HepG2 (cell line): ENCODE measurements at regions of chr17 and their contacts with region 1.

Region 1: GRCh38 chr17:43211480-43212402 is at the start of gene TMEM106A:
- DNase-seq: peak; percentile 75
- ATAC-seq: peak; percentile 81
- H3K4me3 ChIP-seq: peak within 1 kb of the TSS; percentile 77 to 98 (median 77)
- H3K27ac ChIP-seq: peak within 1 kb of the TSS; percentile 80
- H3K4me1 ChIP-seq: peaks cover 62% of the 10 kb centered on the region
- H3K27me3 ChIP-seq: no peaks in the 10 kb centered on the region; a peak in 1 of 5 replicates
- CTCF ChIP-seq: peak; percentile 48
- EP300 ChIP-seq: no peak
- POLR2A ChIP-seq: peak; percentile 82 to 97
- RAD21 ChIP-seq: peak; percentile 43
- total RNA-seq, gene TMEM106A: 7.3 and 16.9 TPM in 2 replicates

Region 2: DNA sequence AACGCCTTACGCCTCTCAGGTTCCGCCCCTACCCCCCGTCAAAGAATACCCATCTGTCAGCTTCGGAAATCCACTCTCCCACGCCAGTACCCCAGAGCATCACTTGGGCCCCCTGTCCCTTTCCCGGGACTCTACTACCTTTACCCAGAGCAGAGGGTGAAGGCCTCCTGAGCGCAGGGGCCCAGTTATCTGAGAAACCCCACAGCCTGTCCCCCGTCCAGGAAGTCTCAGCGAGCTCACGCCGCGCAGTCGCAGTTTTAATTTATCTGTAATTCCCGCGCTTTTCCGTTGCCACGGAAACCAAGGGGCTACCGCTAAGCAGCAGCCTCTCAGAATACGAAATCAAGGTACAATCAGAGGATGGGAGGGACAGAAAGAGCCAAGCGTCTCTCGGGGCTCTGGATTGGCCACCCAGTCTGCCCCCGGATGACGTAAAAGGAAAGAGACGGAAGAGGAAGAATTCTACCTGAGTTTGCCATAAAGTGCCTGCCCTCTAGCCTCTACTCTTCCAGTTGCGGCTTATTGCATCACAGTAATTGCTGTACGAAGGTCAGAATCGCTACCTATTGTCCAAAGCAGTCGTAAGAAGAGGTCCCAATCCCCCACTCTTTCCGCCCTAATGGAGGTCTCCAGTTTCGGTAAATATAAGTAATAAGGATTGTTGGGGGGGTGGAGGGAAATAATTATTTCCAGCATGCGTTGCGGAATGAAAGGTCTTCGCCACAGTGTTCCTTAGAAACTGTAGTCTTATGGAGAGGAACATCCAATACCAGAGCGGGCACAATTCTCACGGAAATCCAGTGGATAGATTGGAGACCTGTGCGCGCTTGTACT is 86.4 kb before region 1 on chr17 and contains the start of gene BRCA1:
- CTCF ChIA-PET with region 1: no interaction called
- POLR2A ChIA-PET with region 1: interaction called, 22 read pairs
- in situ Hi-C with region 1: no loop called
- intact Hi-C with region 1: no loop called
- DNase-seq: peak; percentile 100
- ATAC-seq: peak; percentile 91
- H3K4me3 ChIP-seq: peak within 1 kb of the TSS; percentile 87 to 94 (median 91)
- H3K27ac ChIP-seq: peak within 1 kb of the TSS; percentile 95
- H3K4me1 ChIP-seq: peaks cover 53% of the 10 kb centered on the region
- H3K27me3 ChIP-seq: no peaks in the 10 kb centered on the region; a peak in 1 of 5 replicates
- CTCF ChIP-seq: peak; percentile 23; the same call in 1 of the 2 replicates
- EP300 ChIP-seq: peak; percentile 45 to 73; a peak in 2 of 4 replicates
- POLR2A ChIP-seq: peak; percentile 76 to 97
- RAD21 ChIP-seq: peak; percentile 55; the same call in 1 of the 2 replicates
- total RNA-seq, gene BRCA1: 37.5 and 56.0 TPM in 2 replicates

Region 3: DNA sequence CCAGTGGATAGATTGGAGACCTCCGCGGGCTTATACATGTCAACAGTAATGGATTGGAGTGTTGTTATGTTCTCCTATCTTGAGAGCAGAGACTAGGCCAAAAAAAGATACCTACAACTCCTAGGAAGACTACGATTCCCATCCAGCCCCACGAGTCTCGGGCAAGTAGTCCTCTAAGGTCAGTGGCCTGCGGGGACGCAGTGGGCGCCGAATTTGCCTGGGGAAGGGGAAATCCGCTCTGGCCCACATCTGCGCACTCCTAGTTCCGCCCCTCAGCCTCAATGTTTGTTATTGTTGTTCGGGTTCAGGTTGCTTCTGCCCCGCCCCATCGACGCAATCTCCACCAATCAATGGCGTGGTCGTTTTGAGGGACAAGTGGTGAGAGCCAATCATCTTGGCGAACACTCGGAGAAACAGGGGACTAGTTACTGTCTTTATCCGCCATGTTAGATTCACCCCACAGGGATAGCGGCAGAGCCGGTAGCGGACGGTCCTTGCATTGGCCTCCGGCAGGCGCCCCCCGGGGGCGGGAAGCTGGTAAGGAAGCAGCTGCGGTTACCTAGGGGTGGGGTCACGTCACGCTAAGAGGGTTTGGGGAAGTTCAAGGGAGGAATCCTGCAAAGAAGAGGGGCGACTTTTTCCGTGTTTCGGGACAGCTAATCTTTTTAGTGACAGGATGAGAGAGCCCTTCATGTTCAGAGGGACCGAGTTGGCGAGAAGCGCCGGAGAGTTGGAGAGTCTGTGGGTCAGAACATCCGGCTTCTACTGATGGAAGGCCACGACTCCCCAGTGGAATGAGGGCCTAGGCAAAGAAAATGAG is 40.8 kb before region 1 on chr17 and contains the start of gene NBR1:
- CTCF ChIA-PET with region 1: no interaction called
- POLR2A ChIA-PET with region 1: interaction called, 93 read pairs
- in situ Hi-C with region 1: no loop called
- intact Hi-C with region 1: loop called (anchors 2 kb)
- DNase-seq: peak; percentile 99
- ATAC-seq: peak; percentile 90
- H3K4me3 ChIP-seq: peak within 1 kb of the TSS; percentile 62 to 94 (median 75)
- H3K27ac ChIP-seq: peak within 1 kb of the TSS; percentile 90
- H3K4me1 ChIP-seq: peaks cover 69% of the 10 kb centered on the region
- H3K27me3 ChIP-seq: no peaks in the 10 kb centered on the region; a peak in 1 of 5 replicates
- CTCF ChIP-seq: peak; percentile 79
- EP300 ChIP-seq: peak in 1 of 2 experiments; percentile 43; a peak in 2 of 4 replicates
- POLR2A ChIP-seq: peak; percentile 76 to 89
- RAD21 ChIP-seq: peak; percentile 68
- total RNA-seq, gene NBR1: 51.7 and 79.0 TPM in 2 replicates

Region 4: DNA sequence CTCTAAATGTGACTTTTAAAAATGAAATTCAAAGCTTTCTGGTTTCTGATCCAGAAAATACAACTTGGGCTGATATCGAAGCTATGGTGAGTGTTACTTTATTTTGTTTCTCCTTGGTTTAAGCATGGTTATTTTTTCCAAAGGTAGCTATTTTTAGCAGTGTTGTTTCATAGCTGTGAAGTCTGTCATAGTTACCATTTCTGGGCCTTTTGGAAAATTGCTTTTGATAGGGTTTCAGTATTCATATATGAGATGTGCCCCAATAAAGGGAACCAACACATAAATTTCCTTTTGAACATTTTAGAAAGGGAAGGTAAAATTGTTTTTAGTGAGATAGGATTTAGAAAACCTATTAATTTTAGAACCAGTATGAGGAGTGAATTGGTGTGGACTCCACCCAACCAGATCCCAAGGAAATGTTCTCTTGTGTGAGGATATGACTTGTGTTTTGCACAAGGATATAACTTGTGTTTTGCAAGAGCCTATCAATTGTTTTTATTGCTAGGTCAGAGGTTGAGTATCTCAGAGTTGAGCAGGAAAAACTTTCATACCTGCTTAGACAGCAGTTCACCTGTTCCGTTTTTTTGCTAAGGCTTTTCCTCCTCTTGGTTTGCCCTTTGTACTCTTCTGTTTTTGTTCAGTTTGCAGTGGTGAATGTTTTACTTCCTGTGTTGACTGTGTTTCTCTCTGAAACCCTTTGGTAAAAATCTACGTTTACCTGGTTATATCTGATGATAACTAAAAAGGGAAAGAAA is 35.7 kb before region 1 on chr17:
- CTCF ChIA-PET with region 1: no interaction called
- POLR2A ChIA-PET with region 1: interaction called, 93 read pairs
- in situ Hi-C with region 1: no loop called
- intact Hi-C with region 1: loop called (anchors 2 kb)
- DNase-seq: peak; percentile 87
- ATAC-seq: peak; percentile 75
- H3K4me3 ChIP-seq: peak overlapping the region; percentile 19 to 40 (median 38); a peak in 5 of 6 replicates
- H3K27ac ChIP-seq: peak overlapping the region; percentile 82
- H3K4me1 ChIP-seq: peaks cover 73% of the 10 kb centered on the region
- H3K27me3 ChIP-seq: no peaks in the 10 kb centered on the region; a peak in 1 of 5 replicates
- CTCF ChIP-seq: no peak
- EP300 ChIP-seq: peak in 1 of 2 experiments; percentile 67; a peak in 2 of 4 replicates
- POLR2A ChIP-seq: peak in 1 of 2 experiments; percentile 21; a peak in 1 of 4 replicates
- RAD21 ChIP-seq: no peak

Region 5: GRCh38 chr17:43200127-43200526 is 11.6 kb before region 1 on chr17:
- CTCF ChIA-PET with region 1: no interaction called
- POLR2A ChIA-PET with region 1: interaction called, 44 read pairs
- in situ Hi-C with region 1: no loop called
- intact Hi-C with region 1: no loop called
- DNase-seq: no peak
- ATAC-seq: peak; percentile 68
- H3K4me3 ChIP-seq: no peak overlapping the region
- H3K27ac ChIP-seq: no peak overlapping the region
- H3K4me1 ChIP-seq: peaks cover 14% of the 10 kb centered on the region; the same call in 1 of the 2 replicates
- H3K27me3 ChIP-seq: no peaks in the 10 kb centered on the region
- CTCF ChIP-seq: peak; percentile 26
- EP300 ChIP-seq: no peak
- POLR2A ChIP-seq: no peak
- RAD21 ChIP-seq: no peak

Region 6: GRCh38 chr17:43224146-43224695 is 12.5 kb after region 1 on chr17:
- CTCF ChIA-PET with region 1: no interaction called
- POLR2A ChIA-PET with region 1: interaction called, 28 read pairs
- in situ Hi-C with region 1: no loop called
- intact Hi-C with region 1: no loop called
- DNase-seq: no peak
- ATAC-seq: peak; percentile 12
- H3K4me3 ChIP-seq: no peak overlapping the region
- H3K27ac ChIP-seq: peak overlapping the region; percentile 12
- H3K4me1 ChIP-seq: peaks cover 14% of the 10 kb centered on the region
- H3K27me3 ChIP-seq: no peaks in the 10 kb centered on the region
- CTCF ChIP-seq: no peak
- EP300 ChIP-seq: no peak
- POLR2A ChIP-seq: no peak
- RAD21 ChIP-seq: no peak